ENCODE measurements at regions of chr20 and their contacts with region 1.

Region 1: GRCh38 chr20:2873010-2873746 is at the start of gene PTPRA:
- DNase-seq: peak; percentile 86
- H3K4me3 ChIP-seq: peak within 1 kb of the TSS; percentile 83 to 99 (median 96)
- H3K27ac ChIP-seq: peak within 1 kb of the TSS; percentile 52
- H3K4me1 ChIP-seq: peaks cover 20% of the 10 kb centered on the region
- H3K27me3 ChIP-seq: no peaks in the 10 kb centered on the region
- CTCF ChIP-seq: no peak
- total RNA-seq, gene PTPRA: 37.5 to 39.2 TPM

Region 2: GRCh38 chr20:2750491-2751251 is 122.5 kb before region 1 on chr20:
- CTCF ChIA-PET with region 1: interaction called, 15 read pairs
- dilution Hi-C with region 1: no loop called
- in situ Hi-C with region 1: no loop called
- intact Hi-C with region 1: no loop called
- DNase-seq: peak; percentile 20
- H3K4me3 ChIP-seq: no peak overlapping the region
- H3K27ac ChIP-seq: no peak overlapping the region
- H3K4me1 ChIP-seq: peaks cover 10% of the 10 kb centered on the region
- H3K27me3 ChIP-seq: peaks cover 20% of the 10 kb centered on the region
- CTCF ChIP-seq: no peak

Region 3: GRCh38 chr20:3218307-3218988 is 345.3 kb after region 1 on chr20:
- CTCF ChIA-PET with region 1: no interaction called
- dilution Hi-C with region 1: no loop called
- in situ Hi-C with region 1: no loop called
- intact Hi-C with region 1: no loop called
- DNase-seq: peak; percentile 12
- H3K4me3 ChIP-seq: no peak overlapping the region
- H3K27ac ChIP-seq: no peak overlapping the region
- H3K4me1 ChIP-seq: peaks cover 13% of the 10 kb centered on the region
- H3K27me3 ChIP-seq: no peaks in the 10 kb centered on the region
- CTCF ChIP-seq: peak; percentile 72 to 87